ENCODE measurements at regions of chr2 and their contacts with region 1.

Region 1: GRCh38 chr2:196068271-196069209 is at the start of gene DNAH7:
- DNase-seq: peak; percentile 94
- ATAC-seq: peak; percentile 97
- H3K4me3 Mint-ChIP-seq: peak within 1 kb of the TSS; percentile 77
- H3K27ac Mint-ChIP-seq: peak within 1 kb of the TSS; percentile 72
- H3K4me1 Mint-ChIP-seq: peaks cover 10% of the 10 kb centered on the region
- H3K27me3 Mint-ChIP-seq: peaks cover under 1% of the 10 kb centered on the region
- total RNA-seq, gene DNAH7: not detected

Region 2: GRCh38 chr2:194545978-194546377 is 1522.6 kb before region 1 on chr2:
- CTCF ChIA-PET with region 1: no interaction called
- POLR2A ChIA-PET with region 1: no interaction called
- intact Hi-C with region 1: loop called (anchors 5 to 10 kb)
- DNase-seq: no peak
- ATAC-seq: no peak
- H3K4me3 Mint-ChIP-seq: no peak overlapping the region
- H3K27ac Mint-ChIP-seq: no peak overlapping the region
- H3K4me1 Mint-ChIP-seq: no peaks in the 10 kb centered on the region
- H3K27me3 Mint-ChIP-seq: no peaks in the 10 kb centered on the region

Region 3: GRCh38 chr2:195407782-195408181 is 660.8 kb before region 1 on chr2:
- CTCF ChIA-PET with region 1: no interaction called
- POLR2A ChIA-PET with region 1: no interaction called
- intact Hi-C with region 1: loop called in 1 of 2 experiments (anchors 2 kb)
- DNase-seq: no peak
- ATAC-seq: no peak
- H3K4me3 Mint-ChIP-seq: no peak overlapping the region
- H3K27ac Mint-ChIP-seq: no peak overlapping the region
- H3K4me1 Mint-ChIP-seq: peaks cover 8% of the 10 kb centered on the region
- H3K27me3 Mint-ChIP-seq: no peaks in the 10 kb centered on the region

Region 4: DNA sequence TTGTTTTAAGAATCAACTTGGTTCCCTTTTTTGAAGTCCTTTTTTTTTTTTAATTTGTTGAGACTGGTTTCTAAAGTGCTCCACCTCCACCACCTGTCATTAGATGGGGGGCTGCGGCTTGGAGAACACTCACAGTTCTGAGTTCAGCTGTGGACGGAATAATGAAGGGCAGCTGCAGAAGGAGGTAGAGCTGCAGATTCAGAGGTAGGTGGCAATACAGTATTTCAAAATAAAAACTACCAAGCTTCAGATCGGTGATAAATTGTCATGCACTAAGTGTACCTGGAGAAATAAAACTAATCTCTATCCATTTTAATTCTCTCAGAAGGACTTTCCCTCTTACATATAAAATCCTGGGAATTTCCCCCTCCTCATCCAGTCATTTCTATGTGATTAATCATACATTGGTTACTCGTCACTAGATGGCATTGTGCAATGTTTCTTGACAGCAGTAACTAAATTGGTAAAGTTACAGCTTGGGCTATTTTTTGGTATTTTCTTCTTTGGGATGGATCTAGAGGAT is 492.6 kb before region 1 on chr2:
- CTCF ChIA-PET with region 1: no interaction called
- POLR2A ChIA-PET with region 1: no interaction called
- intact Hi-C with region 1: loop called in 1 of 2 experiments (anchors 5 kb)
- DNase-seq: no peak
- ATAC-seq: peak; percentile 75
- H3K4me3 Mint-ChIP-seq: peak overlapping the region; percentile 33
- H3K27ac Mint-ChIP-seq: peak overlapping the region; percentile 67
- H3K4me1 Mint-ChIP-seq: peaks cover 71% of the 10 kb centered on the region
- H3K27me3 Mint-ChIP-seq: no peaks in the 10 kb centered on the region

Region 5: GRCh38 chr2:195683174-195683573 is 385.4 kb before region 1 on chr2:
- CTCF ChIA-PET with region 1: interaction called, 4 read pairs
- POLR2A ChIA-PET with region 1: no interaction called
- intact Hi-C with region 1: loop called in 1 of 2 experiments (anchors 5 kb)
- DNase-seq: no peak
- ATAC-seq: no peak
- H3K4me3 Mint-ChIP-seq: no peak overlapping the region
- H3K27ac Mint-ChIP-seq: no peak overlapping the region
- H3K4me1 Mint-ChIP-seq: peaks cover 27% of the 10 kb centered on the region
- H3K27me3 Mint-ChIP-seq: no peaks in the 10 kb centered on the region

Region 6: GRCh38 chr2:195813421-195813820 is 255.1 kb before region 1 on chr2:
- CTCF ChIA-PET with region 1: no interaction called
- POLR2A ChIA-PET with region 1: no interaction called
- intact Hi-C with region 1: no loop called
- DNase-seq: no peak
- ATAC-seq: no peak
- H3K4me3 Mint-ChIP-seq: no peak overlapping the region
- H3K27ac Mint-ChIP-seq: no peak overlapping the region
- H3K4me1 Mint-ChIP-seq: no peaks in the 10 kb centered on the region
- H3K27me3 Mint-ChIP-seq: no peaks in the 10 kb centered on the region

Region 7: GRCh38 chr2:196149948-196150347 is 81.4 kb after region 1 on chr2:
- CTCF ChIA-PET with region 1: no interaction called
- POLR2A ChIA-PET with region 1: no interaction called
- intact Hi-C with region 1: no loop called
- DNase-seq: no peak
- ATAC-seq: peak; percentile 27
- H3K4me3 Mint-ChIP-seq: peak overlapping the region; percentile 11
- H3K27ac Mint-ChIP-seq: peak overlapping the region; percentile 92
- H3K4me1 Mint-ChIP-seq: peaks cover 90% of the 10 kb centered on the region
- H3K27me3 Mint-ChIP-seq: no peaks in the 10 kb centered on the region

Region 8: GRCh38 chr2:196277002-196277401 is 208.5 kb after region 1 on chr2:
- CTCF ChIA-PET with region 1: interaction called, 5 read pairs
- POLR2A ChIA-PET with region 1: no interaction called
- intact Hi-C with region 1: loop called in 1 of 2 experiments (anchors 2 kb)
- DNase-seq: peak; percentile 50
- ATAC-seq: peak; percentile 20
- H3K4me3 Mint-ChIP-seq: no peak overlapping the region
- H3K27ac Mint-ChIP-seq: peak overlapping the region; percentile 11
- H3K4me1 Mint-ChIP-seq: peaks cover 61% of the 10 kb centered on the region
- H3K27me3 Mint-ChIP-seq: no peaks in the 10 kb centered on the region